GM10248 (cell line): ENCODE measurements at regions of chr12 and their contacts with region 1.

Region 1: GRCh38 chr12:69290545-69291277 is 51.3 kb downstream of the CPSF6 start:
- DNase-seq: peak; percentile 73
- CTCF ChIP-seq: peak; percentile 97

Region 2: GRCh38 chr12:69275471-69275891 is 15.2 kb before region 1 on chr12:
- CTCF ChIA-PET with region 1: interaction called, 17 read pairs
- POLR2A ChIA-PET with region 1: no interaction called
- DNase-seq: no peak
- CTCF ChIP-seq: no peak

Region 3: GRCh38 chr12:69497308-69498026 is 206.8 kb after region 1 on chr12:
- CTCF ChIA-PET with region 1: no interaction called
- POLR2A ChIA-PET with region 1: no interaction called
- DNase-seq: peak; percentile 64
- CTCF ChIP-seq: no peak